H1 (cell line): ENCODE measurements at regions of chr7 and their contacts with region 1.

Region 1: GRCh38 chr7:157719008-157719682 is 382.3 kb downstream of the DNAJB6 start:
- DNase-seq: no peak
- H3K4me3 ChIP-seq: no peak overlapping the region
- H3K27ac ChIP-seq: no peak overlapping the region
- H3K4me1 ChIP-seq: no peaks in the 10 kb centered on the region; a peak in 1 of 7 replicates
- H3K27me3 ChIP-seq: peaks cover 0 to 2% (median under 1%) of the 10 kb centered on the region in 4 experiments; a peak in 3 of 7 replicates
- CTCF ChIP-seq: no peak
- EP300 ChIP-seq: no peak
- POLR2A ChIP-seq: no peak
- RAD21 ChIP-seq: no peak

Region 2: GRCh38 chr7:157707983-157708918 is 10.9 kb before region 1 on chr7:
- CTCF ChIA-PET with region 1: interaction called, 12 read pairs
- POLR2A ChIA-PET with region 1: no interaction called
- DNase-seq: no peak
- H3K4me3 ChIP-seq: no peak overlapping the region
- H3K27ac ChIP-seq: no peak overlapping the region
- H3K4me1 ChIP-seq: no peaks in the 10 kb centered on the region; a peak in 1 of 7 replicates
- H3K27me3 ChIP-seq: no peaks in the 10 kb centered on the region; a peak in 2 of 7 replicates
- CTCF ChIP-seq: no peak
- EP300 ChIP-seq: no peak
- POLR2A ChIP-seq: no peak
- RAD21 ChIP-seq: no peak